Ovary (tissue), 10 donors: ENCODE measurements at regions of chr16 and their contacts with region 1.

Region 1: DNA sequence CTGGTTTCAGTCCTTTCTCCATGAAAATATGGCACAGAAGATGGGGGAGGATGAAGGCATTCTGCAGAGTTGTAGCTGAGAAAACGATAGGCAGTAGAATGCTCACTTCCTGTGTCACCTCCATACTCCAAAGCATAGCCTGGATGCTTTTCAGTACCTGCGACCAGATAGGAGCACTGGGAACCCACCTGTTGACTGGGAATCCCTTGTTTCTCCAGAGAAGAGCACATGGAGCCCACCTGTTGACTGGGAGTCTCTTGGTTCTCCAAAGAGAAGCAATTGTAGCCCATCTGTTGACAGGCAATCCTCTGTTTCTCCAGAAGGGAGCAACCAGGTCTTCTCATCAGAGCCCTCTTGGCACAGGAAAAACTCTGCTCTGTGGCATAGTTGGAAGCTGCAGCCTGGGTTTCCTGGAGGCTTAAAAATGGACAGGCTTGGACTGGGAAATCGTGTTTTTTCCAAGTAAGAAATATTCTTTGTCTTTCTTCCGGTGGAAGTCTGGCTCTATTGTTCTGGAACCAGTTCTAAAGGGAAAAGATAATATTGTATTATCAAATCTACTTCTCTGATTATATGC is 13.2 kb downstream of the TERF2IP start:
- DNase-seq: no peak
- H3K4me3 ChIP-seq: no peak overlapping the region
- H3K27ac ChIP-seq: no peak overlapping the region
- H3K4me1 ChIP-seq: no peaks in the 10 kb centered on the region
- H3K27me3 ChIP-seq: no peaks in the 10 kb centered on the region
- CTCF ChIP-seq: no peak
- EP300 ChIP-seq: no peak
- POLR2A ChIP-seq: no peak

Region 2: GRCh38 chr16:75919664-75920063 is 258.9 kb after region 1 on chr16:
- intact Hi-C with region 1: loop called in 1 of 4 experiments (anchors 10 kb)
- DNase-seq: no peak
- H3K4me3 ChIP-seq: no peak overlapping the region
- H3K27ac ChIP-seq: no peak overlapping the region
- H3K4me1 ChIP-seq: no peaks in the 10 kb centered on the region
- H3K27me3 ChIP-seq: no peaks in the 10 kb centered on the region
- CTCF ChIP-seq: no peak
- EP300 ChIP-seq: no peak
- POLR2A ChIP-seq: no peak